PC-3 (cell line): ENCODE measurements at regions of chr3 and their contacts with region 1.

Region 1: DNA sequence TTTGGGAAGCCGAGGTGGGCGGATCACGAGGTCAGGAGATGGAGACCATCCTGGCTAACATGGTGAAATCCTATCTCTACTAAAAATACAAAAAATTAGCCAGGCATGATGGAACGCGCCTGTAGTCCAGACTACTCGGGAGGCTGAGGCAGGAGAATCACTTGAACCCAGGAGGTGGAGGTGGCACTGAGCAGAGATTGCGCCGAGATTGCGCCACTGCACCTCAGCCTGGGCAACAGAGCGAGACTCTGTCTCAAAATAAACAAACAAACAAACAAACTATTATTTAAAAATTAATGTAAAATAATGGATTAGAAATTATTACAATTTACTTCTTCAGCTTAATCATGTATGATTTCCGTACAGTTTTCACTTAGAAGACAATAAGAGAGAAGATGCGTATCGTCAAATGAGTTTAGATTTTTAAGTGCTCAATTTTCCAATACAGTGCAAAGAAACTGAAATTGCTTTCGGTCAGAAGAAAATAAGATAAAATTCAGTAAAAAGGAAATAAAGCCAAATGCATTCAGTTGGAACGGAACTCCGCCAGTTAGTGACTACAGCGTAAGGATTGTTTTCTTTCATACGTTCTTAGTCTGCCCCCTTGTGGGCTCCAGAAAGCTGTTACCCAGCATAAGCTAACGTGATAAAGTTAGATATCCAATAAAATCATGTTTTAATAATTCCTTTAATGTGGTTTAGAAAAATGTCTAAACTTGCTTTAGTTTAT is 24.8 kb downstream of the AADAC start:
- DNase-seq: peak; percentile 88
- ATAC-seq: peak; percentile 85
- H3K4me3 ChIP-seq: no peak overlapping the region
- H3K27ac ChIP-seq: no peak overlapping the region
- H3K4me1 ChIP-seq: peaks cover 34% of the 10 kb centered on the region
- H3K27me3 ChIP-seq: no peaks in the 10 kb centered on the region
- CTCF ChIP-seq: peak; percentile 92

Region 2: GRCh38 chr3:151227807-151228665 is 610.7 kb before region 1 on chr3:
- CTCF ChIA-PET with region 1: no interaction called
- POLR2A ChIA-PET with region 1: no interaction called
- intact Hi-C with region 1: loop called (anchors 2 kb)
- DNase-seq: peak; percentile 81
- ATAC-seq: peak; percentile 82
- H3K4me3 ChIP-seq: no peak overlapping the region
- H3K27ac ChIP-seq: peak overlapping the region; percentile 63
- H3K4me1 ChIP-seq: peaks cover 31% of the 10 kb centered on the region
- H3K27me3 ChIP-seq: no peaks in the 10 kb centered on the region
- CTCF ChIP-seq: peak; percentile 97

Region 3: DNA sequence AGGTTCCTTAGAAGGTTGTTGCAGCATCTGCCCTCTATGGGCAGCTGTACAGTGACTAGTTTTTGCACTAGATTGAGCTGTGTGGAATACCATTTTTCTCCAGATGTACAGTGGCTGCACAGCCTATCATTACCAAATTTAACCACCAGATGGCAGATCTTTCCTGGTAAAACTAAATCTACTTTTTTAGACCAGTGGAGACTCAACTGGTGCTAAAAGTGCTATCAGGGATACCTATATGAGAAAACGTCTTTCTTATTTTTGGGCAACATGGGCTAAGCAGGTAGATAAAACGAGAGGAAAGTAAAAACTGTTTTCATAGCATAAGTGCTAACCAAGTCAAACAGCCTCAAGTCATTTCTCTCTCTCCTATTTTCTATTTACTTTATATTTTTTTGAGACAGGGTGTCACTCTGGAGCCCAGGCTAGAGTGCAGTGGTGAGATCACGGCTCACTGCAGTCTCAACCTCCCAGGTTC is 399.1 kb before region 1 on chr3:
- CTCF ChIA-PET with region 1: interaction called, 20 read pairs
- POLR2A ChIA-PET with region 1: no interaction called
- intact Hi-C with region 1: loop called (anchors 1 kb)
- DNase-seq: peak; percentile 94
- ATAC-seq: peak; percentile 92
- H3K4me3 ChIP-seq: no peak overlapping the region
- H3K27ac ChIP-seq: no peak overlapping the region
- H3K4me1 ChIP-seq: peaks cover 29% of the 10 kb centered on the region
- H3K27me3 ChIP-seq: no peaks in the 10 kb centered on the region
- CTCF ChIP-seq: peak; percentile 91

Region 4: GRCh38 chr3:151544164-151544548 is 294.6 kb before region 1 on chr3:
- CTCF ChIA-PET with region 1: no interaction called
- POLR2A ChIA-PET with region 1: no interaction called
- intact Hi-C with region 1: loop called (anchors 5 kb)
- DNase-seq: peak; percentile 23
- ATAC-seq: no peak
- H3K4me3 ChIP-seq: no peak overlapping the region
- H3K27ac ChIP-seq: peak overlapping the region; percentile 46; the same call in 1 of the 2 replicates
- H3K4me1 ChIP-seq: peaks cover 33% of the 10 kb centered on the region
- H3K27me3 ChIP-seq: no peaks in the 10 kb centered on the region
- CTCF ChIP-seq: no peak

Region 5: DNA sequence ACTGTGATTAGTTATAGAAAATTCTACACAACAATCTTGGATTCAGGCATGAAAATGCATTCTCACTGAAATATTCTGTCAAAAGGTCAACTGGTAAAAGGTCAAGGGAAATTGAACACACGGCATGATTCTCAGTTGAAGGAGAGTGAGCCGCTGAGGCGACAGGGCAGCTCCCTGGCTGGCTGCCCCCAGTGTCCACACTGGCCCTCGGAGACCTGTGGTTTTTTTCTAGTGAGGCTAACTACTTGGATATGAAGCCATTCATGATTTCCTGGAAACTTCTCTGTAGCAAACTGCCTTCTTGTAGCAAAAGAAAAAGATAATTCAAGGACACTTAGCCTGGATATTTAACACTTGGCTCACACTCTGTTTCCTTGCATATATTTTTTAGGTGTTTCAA is 67.8 kb before region 1 on chr3:
- CTCF ChIA-PET with region 1: no interaction called
- POLR2A ChIA-PET with region 1: no interaction called
- intact Hi-C with region 1: loop called (anchors 2 kb)
- DNase-seq: peak; percentile 21
- ATAC-seq: 0 out of 2 replicates have a peak, but pooled peaks have one; percentile 5
- H3K4me3 ChIP-seq: no peak overlapping the region
- H3K27ac ChIP-seq: peak overlapping the region; percentile 88
- H3K4me1 ChIP-seq: peaks cover 38% of the 10 kb centered on the region
- H3K27me3 ChIP-seq: no peaks in the 10 kb centered on the region
- CTCF ChIP-seq: no peak

Region 6: GRCh38 chr3:151960961-151961579 is 122.3 kb after region 1 on chr3:
- CTCF ChIA-PET with region 1: no interaction called
- POLR2A ChIA-PET with region 1: no interaction called
- intact Hi-C with region 1: no loop called
- DNase-seq: no peak
- ATAC-seq: no peak
- H3K4me3 ChIP-seq: no peak overlapping the region
- H3K27ac ChIP-seq: no peak overlapping the region
- H3K4me1 ChIP-seq: no peaks in the 10 kb centered on the region
- H3K27me3 ChIP-seq: no peaks in the 10 kb centered on the region
- CTCF ChIP-seq: no peak